ENCODE measurements at regions of chr15 and their contacts with region 1.

Region 1: DNA sequence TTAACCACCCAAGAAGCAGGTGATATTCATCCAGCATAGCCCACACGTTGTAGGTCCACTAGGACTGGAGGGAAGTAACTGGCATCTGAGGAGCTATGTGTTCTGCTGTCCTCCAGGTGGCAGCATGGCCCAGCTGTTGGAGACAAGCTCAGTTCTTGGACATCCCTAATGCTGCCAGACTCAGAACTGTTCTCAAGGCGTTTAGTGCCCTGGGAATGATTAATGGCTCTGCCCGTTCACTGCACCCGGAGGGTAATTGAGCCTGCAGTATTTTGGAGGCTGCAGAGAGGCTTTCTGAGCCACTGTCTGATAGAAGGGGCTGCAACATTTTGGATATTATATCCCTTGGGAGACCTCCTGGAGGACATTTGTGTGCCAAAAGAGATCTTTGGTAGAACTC is 521.2 kb upstream of the SEMA6D start:
- DNase-seq: peak; percentile 70
- H3K4me3 ChIP-seq: peak overlapping the region in 1 of 2 experiments; percentile 10; a peak in 1 of 4 replicates
- H3K27ac ChIP-seq: no peak overlapping the region
- H3K4me1 ChIP-seq: peaks cover 0 to 2% of the 10 kb centered on the region in 2 experiments; a peak in 2 of 4 replicates
- H3K27me3 ChIP-seq: no peaks in the 10 kb centered on the region
- CTCF ChIP-seq: peak; percentile 76
- EP300 ChIP-seq: peak in 1 of 2 experiments; percentile 82; a peak in 2 of 4 replicates
- RAD21 ChIP-seq: peak; percentile 100

Region 2: GRCh38 chr15:46786590-46787285 is 409.3 kb before region 1 on chr15:
- CTCF ChIA-PET with region 1: interaction called, 10 read pairs
- POLR2A ChIA-PET with region 1: no interaction called
- DNase-seq: no peak
- H3K4me3 ChIP-seq: no peak overlapping the region
- H3K27ac ChIP-seq: no peak overlapping the region
- H3K4me1 ChIP-seq: no peaks in the 10 kb centered on the region
- H3K27me3 ChIP-seq: no peaks in the 10 kb centered on the region
- CTCF ChIP-seq: no peak
- EP300 ChIP-seq: no peak
- RAD21 ChIP-seq: peak; percentile 73

Region 3: DNA sequence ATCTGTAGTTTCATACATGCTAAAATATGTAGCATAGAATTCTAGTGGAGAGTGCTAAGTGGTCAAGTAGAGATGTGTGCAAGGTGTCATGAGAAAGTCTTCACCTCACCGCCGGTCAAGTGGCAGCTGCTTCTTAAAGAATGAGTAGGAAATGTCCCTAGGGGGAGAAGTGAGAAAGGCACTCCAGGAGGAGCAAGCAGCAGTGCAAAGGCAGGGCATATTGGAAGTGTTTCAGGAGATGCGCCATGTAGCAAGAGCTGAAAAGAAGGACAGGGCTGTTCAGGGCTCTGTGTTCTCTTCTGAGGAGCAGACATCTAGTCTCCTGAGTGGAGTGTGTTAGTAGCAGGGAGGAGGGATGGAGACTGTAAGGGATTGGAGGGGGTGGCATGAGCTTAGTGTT is 208.8 kb after region 1 on chr15:
- CTCF ChIA-PET with region 1: interaction called, 12 read pairs
- POLR2A ChIA-PET with region 1: no interaction called
- DNase-seq: no peak
- H3K4me3 ChIP-seq: no peak overlapping the region
- H3K27ac ChIP-seq: no peak overlapping the region
- H3K4me1 ChIP-seq: peaks cover 0 to 6% of the 10 kb centered on the region in 2 experiments; a peak in 2 of 4 replicates
- H3K27me3 ChIP-seq: no peaks in the 10 kb centered on the region
- CTCF ChIP-seq: no peak
- EP300 ChIP-seq: no peak
- RAD21 ChIP-seq: no peak

Region 4: DNA sequence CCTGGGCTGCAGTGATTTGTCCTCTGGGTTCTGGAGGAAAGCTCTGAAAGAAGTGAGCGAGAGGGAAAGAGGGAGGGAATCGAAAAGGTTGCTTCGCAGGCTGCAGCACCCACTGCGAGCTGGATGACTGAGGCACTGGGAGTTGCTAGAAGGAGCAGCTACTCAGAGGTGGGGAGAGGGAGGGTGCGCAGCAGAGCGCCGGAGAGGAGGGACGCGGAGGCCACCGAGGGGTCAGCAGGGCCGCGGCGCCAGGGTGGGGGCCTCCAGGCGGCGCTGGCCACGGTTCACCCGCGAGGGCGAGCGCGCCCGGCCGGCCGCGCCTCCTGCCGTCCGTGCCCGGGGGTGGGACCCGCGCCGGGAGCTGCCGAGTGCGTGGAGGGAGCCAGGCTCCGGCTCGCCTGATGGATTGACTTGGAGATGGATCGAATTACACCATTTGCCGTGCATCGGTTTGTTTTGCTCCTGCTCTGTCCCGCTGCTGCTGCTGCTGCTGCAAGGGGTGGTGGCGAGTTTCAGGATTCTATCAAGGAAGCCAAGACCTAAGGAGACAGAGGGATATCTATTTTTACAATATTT is 521.1 kb after region 1 on chr15 and contains the start of gene SEMA6D:
- CTCF ChIA-PET with region 1: interaction called, 21 read pairs
- POLR2A ChIA-PET with region 1: interaction called, 3 read pairs
- DNase-seq: peak; percentile 93
- H3K4me3 ChIP-seq: peak within 1 kb of the TSS; percentile 45 to 64
- H3K27ac ChIP-seq: peak within 1 kb of the TSS in 1 of 2 experiments; percentile 11; a peak in 1 of 4 replicates
- H3K4me1 ChIP-seq: peaks cover 6 to 8% of the 10 kb centered on the region in 2 experiments; a peak in 3 of 4 replicates
- H3K27me3 ChIP-seq: peaks cover 57% of the 10 kb centered on the region
- CTCF ChIP-seq: peak; percentile 33
- EP300 ChIP-seq: no peak
- RAD21 ChIP-seq: peak; percentile 42
- polyA plus RNA-seq, gene SEMA6D: 0.30 and 0.47 TPM in 2 replicates

Region 5: DNA sequence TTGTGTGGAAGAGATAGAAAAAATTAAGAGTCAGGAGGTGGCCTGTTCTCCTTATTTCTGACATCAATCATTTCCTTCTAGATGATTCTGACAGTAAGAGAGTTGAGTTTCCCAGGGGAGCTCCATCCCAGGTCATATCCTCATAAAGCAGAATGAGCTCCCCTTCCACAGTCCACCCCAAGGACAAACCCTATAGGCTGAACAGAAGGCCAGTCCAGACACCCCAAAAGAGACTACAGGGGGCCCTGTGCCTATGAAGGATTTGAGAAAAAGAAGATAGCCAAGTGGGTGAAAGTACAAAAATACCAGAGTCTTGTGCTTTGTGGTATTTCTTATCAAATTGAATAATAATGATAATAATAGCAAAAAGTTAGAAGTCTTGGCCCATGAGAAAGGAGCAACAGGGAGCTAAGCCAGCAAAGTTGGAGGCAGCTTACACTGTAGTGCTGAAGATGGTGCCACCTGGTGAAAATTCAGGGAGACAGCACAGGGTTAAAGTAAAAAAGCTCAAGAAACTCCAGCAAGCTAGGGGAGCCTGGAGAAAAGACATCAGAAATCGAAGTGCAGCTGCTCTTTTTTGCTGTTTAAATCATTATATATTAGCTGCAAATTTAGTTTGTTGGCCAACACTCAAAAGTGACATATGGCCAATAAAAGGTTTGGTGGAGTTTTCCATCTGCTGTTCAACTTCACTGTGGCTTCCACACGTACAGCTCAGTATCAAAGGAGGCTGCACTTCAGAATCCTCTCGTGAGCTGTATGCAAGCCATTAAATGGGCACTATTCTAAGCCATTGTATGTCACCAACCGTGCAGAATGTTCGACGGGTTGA is 888.9 kb after region 1 on chr15:
- CTCF ChIA-PET with region 1: interaction called, 29 read pairs
- POLR2A ChIA-PET with region 1: no interaction called
- DNase-seq: peak; percentile 26
- H3K4me3 ChIP-seq: no peak overlapping the region
- H3K27ac ChIP-seq: no peak overlapping the region; a peak in 1 of 4 replicates
- H3K4me1 ChIP-seq: peaks cover 0 to 17% of the 10 kb centered on the region in 2 experiments; a peak in 1 of 4 replicates
- H3K27me3 ChIP-seq: no peaks in the 10 kb centered on the region; the same call in 1 of the 2 replicates
- CTCF ChIP-seq: peak; percentile 47
- EP300 ChIP-seq: no peak
- RAD21 ChIP-seq: peak; percentile 72

Region 6: DNA sequence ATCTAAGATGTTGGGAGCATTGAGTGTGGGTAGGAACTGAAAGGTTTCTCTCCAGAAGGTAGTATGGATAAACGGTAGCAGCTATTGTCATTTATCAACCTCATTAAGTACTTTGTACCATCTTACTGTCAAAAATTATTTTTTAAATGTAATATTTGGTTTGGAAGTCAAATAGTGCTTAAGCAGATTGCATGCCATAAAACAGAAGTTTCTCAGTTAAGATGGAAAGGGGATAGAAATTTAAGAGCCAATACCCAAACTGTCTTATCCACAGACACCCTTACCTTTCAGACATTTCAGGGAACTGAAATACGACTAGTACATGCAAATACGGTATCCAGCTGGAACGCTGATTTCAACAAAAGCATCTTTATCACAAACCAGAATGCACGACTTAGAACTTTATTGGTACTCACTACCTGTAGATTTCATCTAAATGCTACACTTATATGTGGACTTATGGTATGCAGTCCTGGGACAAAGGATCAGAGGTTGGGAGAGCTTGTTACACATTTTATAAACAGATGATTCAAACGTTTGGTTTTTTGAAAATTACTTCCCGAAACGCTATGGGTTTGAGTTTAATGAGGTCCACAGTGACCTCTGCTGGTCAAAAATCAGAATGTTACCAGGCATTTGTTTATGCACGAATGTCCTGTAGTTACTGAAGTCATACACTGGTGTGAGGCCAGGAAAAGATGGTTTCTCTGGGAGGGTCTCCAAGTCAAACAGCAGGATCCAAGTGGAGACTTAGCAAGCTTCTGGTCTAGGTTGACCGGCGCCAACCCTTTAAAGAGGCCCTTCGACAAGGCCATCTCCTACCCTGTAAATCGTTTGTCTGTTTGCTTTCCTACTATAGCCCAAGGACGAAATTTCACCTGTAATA is 1089.5 kb after region 1 on chr15:
- CTCF ChIA-PET with region 1: interaction called, 47 read pairs
- POLR2A ChIA-PET with region 1: no interaction called
- DNase-seq: peak; percentile 61
- H3K4me3 ChIP-seq: peak overlapping the region; percentile 25 to 44; a peak in 3 of 4 replicates
- H3K27ac ChIP-seq: no peak overlapping the region
- H3K4me1 ChIP-seq: peaks cover 0 to 6% of the 10 kb centered on the region in 2 experiments; a peak in 2 of 4 replicates
- H3K27me3 ChIP-seq: no peaks in the 10 kb centered on the region
- CTCF ChIP-seq: peak; percentile 81
- EP300 ChIP-seq: no peak
- RAD21 ChIP-seq: peak; percentile 75

Measured in SK-N-SH (cell line).